OCI-LY7 (cell line): ENCODE measurements at regions of chr1 and their contacts with region 1.

Region 1: GRCh38 chr1:110495926-110496600 is 22.9 kb downstream of the KCNA10 start:
- DNase-seq: peak; percentile 77
- H3K4me3 ChIP-seq: no peak overlapping the region
- H3K27ac ChIP-seq: no peak overlapping the region
- H3K4me1 ChIP-seq: no peaks in the 10 kb centered on the region
- CTCF ChIP-seq: peak; percentile 97

Region 2: GRCh38 chr1:110196917-110197765 is 298.9 kb before region 1 on chr1:
- CTCF ChIA-PET with region 1: interaction called, 5 read pairs
- POLR2A ChIA-PET with region 1: no interaction called
- intact Hi-C with region 1: loop called (anchors 2 kb)
- DNase-seq: peak; percentile 67
- H3K4me3 ChIP-seq: no peak overlapping the region
- H3K27ac ChIP-seq: no peak overlapping the region
- H3K4me1 ChIP-seq: no peaks in the 10 kb centered on the region
- CTCF ChIP-seq: peak; percentile 94

Region 3: DNA sequence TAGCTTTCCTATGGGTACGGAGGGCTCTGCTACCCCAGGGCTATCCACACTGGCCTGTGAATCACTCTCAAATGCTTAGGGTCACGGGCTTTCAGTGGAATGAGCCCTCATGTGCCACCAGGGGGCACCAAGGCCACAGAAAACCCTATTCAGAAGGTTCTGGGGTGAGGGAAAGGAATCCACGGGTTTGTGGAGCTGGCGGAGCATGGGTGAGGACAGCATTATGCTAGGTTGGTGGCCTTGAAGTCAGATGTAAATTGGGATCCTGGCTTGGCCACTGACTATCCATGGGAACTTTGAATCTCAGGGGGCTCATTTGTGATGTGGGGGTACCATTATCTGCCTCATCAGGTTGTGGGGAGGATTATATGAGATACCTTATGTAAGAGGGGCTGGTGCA is 83.5 kb before region 1 on chr1:
- CTCF ChIA-PET with region 1: interaction called, 7 read pairs
- POLR2A ChIA-PET with region 1: interaction called, 3 read pairs
- intact Hi-C with region 1: loop called (anchors 2 kb)
- DNase-seq: peak; percentile 84
- H3K4me3 ChIP-seq: no peak overlapping the region
- H3K27ac ChIP-seq: no peak overlapping the region
- H3K4me1 ChIP-seq: peaks cover 23% of the 10 kb centered on the region
- CTCF ChIP-seq: peak; percentile 95

Region 4: DNA sequence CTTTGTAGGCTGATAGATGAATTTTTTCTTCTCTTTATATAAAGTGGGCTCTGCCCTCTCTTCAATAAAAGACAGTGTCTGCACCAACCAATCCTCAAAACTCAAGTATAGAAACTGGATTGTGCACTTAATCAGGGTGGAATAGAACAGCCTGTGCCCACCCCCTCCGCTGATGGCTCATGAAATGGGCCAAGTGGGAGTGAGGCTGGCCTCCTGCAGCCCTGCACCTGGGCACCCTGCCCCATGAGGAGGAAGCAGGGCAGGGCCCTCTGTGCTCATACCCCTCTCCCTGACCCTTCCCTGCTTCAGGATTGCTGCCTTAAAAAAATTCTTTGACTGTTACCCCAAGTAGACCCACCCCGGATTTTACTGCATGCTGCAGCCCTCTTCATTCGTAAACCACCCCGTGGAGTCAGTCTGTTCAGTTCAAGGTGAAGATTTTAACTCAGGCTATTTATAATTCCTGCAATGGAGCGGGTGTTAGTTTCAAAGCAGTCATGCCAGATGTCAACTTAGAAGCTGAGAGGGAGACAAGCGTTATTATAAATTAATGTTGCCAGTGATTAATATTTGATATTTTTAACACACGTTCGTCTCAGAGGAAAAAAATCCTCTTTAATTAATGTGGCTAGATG is 29.3 kb before region 1 on chr1:
- CTCF ChIA-PET with region 1: interaction called, 9 read pairs
- POLR2A ChIA-PET with region 1: no interaction called
- intact Hi-C with region 1: loop called (anchors 2 kb)
- DNase-seq: no peak
- H3K4me3 ChIP-seq: no peak overlapping the region
- H3K27ac ChIP-seq: no peak overlapping the region
- H3K4me1 ChIP-seq: no peaks in the 10 kb centered on the region
- CTCF ChIP-seq: no peak